Transverse colon (tissue), 4 donors: ENCODE measurements at regions of chr1 and their contacts with region 1.

Region 1: GRCh38 chr1:48908606-48909005 is 131.9 kb upstream of the BEND5 start:
- DNase-seq: no peak
- H3K4me3 ChIP-seq: no peak overlapping the region
- H3K27ac ChIP-seq: no peak overlapping the region
- H3K4me1 ChIP-seq: no peaks in the 10 kb centered on the region
- H3K27me3 ChIP-seq: no peaks in the 10 kb centered on the region
- CTCF ChIP-seq: no peak
- EP300 ChIP-seq: no peak
- POLR2A ChIP-seq: no peak

Region 2: DNA sequence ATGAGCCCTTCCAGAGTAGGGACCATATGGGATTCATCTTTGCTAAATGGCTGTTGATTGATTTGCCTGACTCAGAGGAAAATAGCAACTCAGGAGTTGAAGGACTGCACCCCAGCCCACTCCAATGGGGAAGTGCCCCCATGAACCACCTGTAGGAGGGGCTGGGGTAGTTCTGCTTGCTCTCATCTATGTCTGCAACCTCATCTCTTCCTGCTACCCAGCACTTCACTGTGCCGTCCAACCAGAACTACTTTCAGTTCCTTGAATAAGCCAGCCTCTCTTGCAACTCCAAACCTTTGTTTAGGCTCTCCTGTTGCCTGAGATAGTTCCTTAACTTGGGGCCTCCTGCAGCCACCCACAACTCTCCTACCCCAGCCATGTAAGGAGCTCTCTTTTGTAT is 158.5 kb before region 1 on chr1:
- in situ Hi-C with region 1: no loop called
- intact Hi-C with region 1: no loop called
- DNase-seq: no peak
- H3K4me3 ChIP-seq: no peak overlapping the region
- H3K27ac ChIP-seq: no peak overlapping the region
- H3K4me1 ChIP-seq: no peaks in the 10 kb centered on the region
- H3K27me3 ChIP-seq: no peaks in the 10 kb centered on the region
- CTCF ChIP-seq: no peak
- EP300 ChIP-seq: no peak
- POLR2A ChIP-seq: no peak

Region 3: GRCh38 chr1:48960320-48960719 is 51.7 kb after region 1 on chr1:
- in situ Hi-C with region 1: no loop called
- intact Hi-C with region 1: no loop called
- DNase-seq: no peak
- H3K4me3 ChIP-seq: no peak overlapping the region
- H3K27ac ChIP-seq: no peak overlapping the region
- H3K4me1 ChIP-seq: no peaks in the 10 kb centered on the region
- H3K27me3 ChIP-seq: no peaks in the 10 kb centered on the region
- CTCF ChIP-seq: no peak
- EP300 ChIP-seq: no peak
- POLR2A ChIP-seq: no peak

Region 4: DNA sequence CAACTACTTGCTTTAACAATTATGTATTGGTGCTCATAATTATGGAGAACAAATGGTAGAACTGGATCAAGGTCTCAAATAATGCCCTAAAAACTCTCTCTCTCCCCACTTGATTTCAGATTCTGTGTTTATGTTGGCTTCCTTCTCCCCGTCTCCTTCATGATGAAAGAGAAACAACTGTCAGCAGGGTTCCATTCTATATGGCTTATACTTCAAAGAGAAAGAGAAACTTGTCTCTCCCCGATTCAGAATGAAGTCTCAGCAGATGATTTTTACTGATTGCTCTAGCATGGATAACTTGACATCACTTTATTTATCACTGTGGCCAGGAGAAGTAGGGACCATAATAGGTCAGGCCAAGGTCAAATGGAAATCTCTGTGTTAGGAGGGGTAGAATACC is 539.6 kb after region 1 on chr1:
- in situ Hi-C with region 1: no loop called
- intact Hi-C with region 1: loop called (anchors 5 kb)
- DNase-seq: no peak
- H3K4me3 ChIP-seq: no peak overlapping the region
- H3K27ac ChIP-seq: no peak overlapping the region
- H3K4me1 ChIP-seq: no peaks in the 10 kb centered on the region
- H3K27me3 ChIP-seq: no peaks in the 10 kb centered on the region
- CTCF ChIP-seq: no peak
- EP300 ChIP-seq: no peak
- POLR2A ChIP-seq: no peak